Right lobe of liver (tissue), 6 donors: ENCODE measurements at regions of chr5 and their contacts with region 1.

Region 1: DNA sequence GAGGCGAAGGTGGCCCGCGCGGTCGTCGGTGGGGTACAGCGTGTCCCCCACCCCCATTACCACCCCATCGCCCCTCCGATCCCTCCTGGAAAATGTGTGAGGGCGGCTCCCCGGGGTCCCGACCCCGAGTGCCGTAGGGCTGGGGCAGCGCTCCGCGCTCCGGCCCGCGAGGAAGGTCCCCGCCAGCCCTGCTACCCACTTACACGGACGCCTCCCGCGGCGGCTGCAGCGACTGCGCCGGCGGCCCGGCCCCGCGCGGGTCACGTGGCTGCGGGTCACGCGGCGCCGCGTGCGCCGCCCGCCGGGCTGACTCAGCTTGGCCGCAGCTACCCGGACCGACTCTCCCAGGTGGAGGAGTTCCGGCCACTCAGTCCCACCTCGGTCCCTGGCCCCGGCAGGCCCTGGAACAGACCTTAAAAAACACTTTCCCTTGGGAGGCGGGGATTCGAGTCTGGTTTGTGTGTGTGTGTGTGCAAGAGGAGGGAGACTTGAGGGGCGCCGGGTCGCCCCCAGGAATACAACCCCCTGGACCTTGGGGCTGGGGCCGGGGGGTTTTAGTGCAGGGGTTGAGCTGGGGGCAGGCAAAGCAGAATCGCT is at the start of gene GNPDA1:
- DNase-seq: peak; percentile 87 to 90 (median 88)
- ATAC-seq: peak; percentile 70 to 83 (median 82)
- H3K4me3 ChIP-seq: peak within 1 kb of the TSS; percentile 65 to 75 (median 70)
- H3K27ac ChIP-seq: peak within 1 kb of the TSS; percentile 90 to 95 (median 94)
- H3K4me1 ChIP-seq: peaks cover 0 to 32% (median 11%) of the 10 kb centered on the region in 4 donors
- H3K27me3 ChIP-seq: no peaks in the 10 kb centered on the region
- CTCF ChIP-seq: peak in 2 of 4 donors; percentile 32 to 36
- POLR2A ChIP-seq: peak; percentile 92
- total RNA-seq, gene GNPDA1: 6.3 to 22.1 (median 14.9) TPM

Region 2: GRCh38 chr5:141878711-141879425 is 134.0 kb before region 1 on chr5:
- intact Hi-C with region 1: no loop called
- DNase-seq: peak; percentile 88 to 92 (median 90)
- ATAC-seq: peak; percentile 67 to 78 (median 69)
- H3K4me3 ChIP-seq: peak overlapping the region; percentile 32 to 84 (median 70)
- H3K27ac ChIP-seq: peak overlapping the region; percentile 18 to 70 (median 62)
- H3K4me1 ChIP-seq: peaks cover 0 to 17% (median 1%) of the 10 kb centered on the region in 4 donors
- H3K27me3 ChIP-seq: no peaks in the 10 kb centered on the region
- CTCF ChIP-seq: peak; percentile 95 to 99 (median 98)
- POLR2A ChIP-seq: no peak

Region 3: GRCh38 chr5:142133330-142134206 is 120.7 kb after region 1 on chr5:
- intact Hi-C with region 1: loop called in 1 of 2 experiments (anchors 10 kb)
- DNase-seq: no peak
- ATAC-seq: peak; percentile 81 to 91 (median 84)
- H3K4me3 ChIP-seq: no peak overlapping the region
- H3K27ac ChIP-seq: peak overlapping the region; percentile 58 to 88 (median 63)
- H3K4me1 ChIP-seq: peaks cover 0 to 34% (median 16%) of the 10 kb centered on the region in 4 donors
- H3K27me3 ChIP-seq: no peaks in the 10 kb centered on the region
- CTCF ChIP-seq: no peak
- POLR2A ChIP-seq: no peak